ENCODE measurements at regions of chr5 and their contacts with region 1.

Region 1: DNA sequence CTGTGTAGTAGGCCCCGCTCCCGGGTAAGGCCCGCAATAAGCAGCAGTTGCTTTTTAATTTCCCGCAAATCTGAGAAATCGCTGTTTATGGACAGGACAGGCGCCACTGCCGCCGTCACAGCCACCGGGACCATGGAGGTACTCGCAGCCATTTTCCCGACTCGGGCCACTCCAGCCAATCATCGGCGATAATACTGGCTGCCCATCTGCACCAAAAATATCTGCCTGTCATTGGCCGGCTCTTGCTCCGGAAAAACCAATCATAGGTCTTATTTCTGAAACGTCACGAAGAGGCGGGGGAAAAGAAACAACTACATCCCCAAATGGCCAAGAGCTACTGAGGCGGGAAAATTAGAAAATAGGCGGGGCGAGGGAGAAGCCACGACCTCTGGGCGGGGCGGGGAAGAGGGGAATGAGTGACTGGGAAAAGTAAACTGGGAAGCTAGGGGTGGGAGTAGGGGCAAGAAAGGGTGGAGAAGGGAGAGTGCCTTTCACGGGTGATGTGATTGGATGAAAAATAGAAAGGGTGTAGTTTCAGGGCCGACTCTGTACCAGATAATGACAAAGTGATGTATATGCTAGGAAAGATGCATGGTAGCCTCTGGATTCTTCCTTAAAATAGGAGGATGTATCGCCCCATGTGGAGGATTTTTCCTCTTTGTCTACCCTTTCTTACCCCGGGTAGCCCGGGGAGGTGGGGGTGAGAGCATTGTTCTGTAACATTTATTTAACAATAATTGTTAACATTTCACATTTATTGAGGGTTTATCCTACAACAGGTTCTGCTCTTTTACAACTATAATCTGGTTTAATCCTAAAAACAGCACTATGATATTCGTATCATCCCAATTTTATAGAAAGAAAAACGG is at the start of gene CDC23:
- DNase-seq: peak; percentile 85 to 97
- H3K4me3 ChIP-seq: peak within 1 kb of the TSS; percentile 73 to 95
- H3K27ac ChIP-seq: peak within 1 kb of the TSS; percentile 60 to 72
- H3K4me1 ChIP-seq: peaks cover 0 to 8% of the 10 kb centered on the region in 2 donors
- H3K27me3 ChIP-seq: no peaks in the 10 kb centered on the region
- CTCF ChIP-seq: no peak
- total RNA-seq, gene CDC23: 13.2 TPM

Region 2: DNA sequence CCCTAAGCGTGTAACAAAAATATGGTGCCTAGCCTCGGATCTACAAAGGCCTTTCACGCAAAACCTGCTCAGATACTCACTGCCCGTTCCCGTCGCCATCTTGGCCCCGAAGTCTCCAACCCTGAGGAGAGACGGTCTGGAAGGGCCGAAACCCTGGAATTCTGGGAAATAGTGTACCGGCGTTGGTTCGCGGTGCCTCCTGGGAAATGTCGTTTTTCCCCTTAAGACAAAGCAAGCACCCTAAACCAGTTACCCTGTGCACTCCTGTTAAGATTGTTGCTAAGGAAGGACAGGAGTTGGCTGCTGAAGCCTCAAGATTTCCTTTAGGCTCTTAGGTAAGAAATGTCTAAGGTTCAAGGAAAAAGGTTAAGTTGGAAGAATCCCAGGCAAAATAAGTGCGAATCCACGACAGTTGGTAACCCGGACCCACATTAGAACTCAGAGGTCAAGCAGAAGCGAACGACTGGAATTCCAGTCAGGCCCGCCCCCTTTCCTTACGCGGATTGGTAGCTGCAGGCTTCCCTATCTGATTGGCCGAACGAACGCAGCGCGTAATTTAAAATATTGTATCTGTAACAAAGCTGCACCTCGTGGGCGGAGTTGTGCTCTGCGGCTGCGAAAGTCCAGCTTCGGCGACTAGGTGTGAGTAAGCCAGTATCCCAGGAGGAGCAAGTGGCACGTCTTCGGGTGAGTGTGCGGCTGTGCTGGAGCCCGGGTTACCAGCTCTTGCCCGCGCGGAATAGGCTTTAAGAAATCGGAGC is 34.7 kb before region 1 on chr5 and contains the starts of genes BRD8 and KIF20A:
- intact Hi-C with region 1: loop called (anchors 2 kb)
- DNase-seq: peak; percentile 89 to 98
- H3K4me3 ChIP-seq: peak within 1 kb of the TSS; percentile 82 to 94
- H3K27ac ChIP-seq: peak within 1 kb of the TSS; percentile 75 to 79
- H3K4me1 ChIP-seq: peaks cover 0 to 9% of the 10 kb centered on the region in 2 donors
- H3K27me3 ChIP-seq: no peaks in the 10 kb centered on the region
- CTCF ChIP-seq: no peak
- total RNA-seq, gene BRD8: 18.8 TPM
- total RNA-seq, gene KIF20A: not detected

Region 3: GRCh38 chr5:138316355-138316754 is 103.0 kb after region 1 on chr5:
- intact Hi-C with region 1: no loop called
- DNase-seq: no peak
- H3K4me3 ChIP-seq: no peak overlapping the region
- H3K27ac ChIP-seq: no peak overlapping the region
- H3K4me1 ChIP-seq: no peaks in the 10 kb centered on the region
- H3K27me3 ChIP-seq: no peaks in the 10 kb centered on the region
- CTCF ChIP-seq: no peak

Region 4: GRCh38 chr5:138337685-138338410 is 124.5 kb after region 1 on chr5 and contains the start of gene FAM53C:
- intact Hi-C with region 1: loop called (anchors 5 kb)
- DNase-seq: peak; percentile 69 to 94
- H3K4me3 ChIP-seq: peak within 1 kb of the TSS; percentile 87 to 93
- H3K27ac ChIP-seq: peak within 1 kb of the TSS; percentile 94 to 95
- H3K4me1 ChIP-seq: peaks cover 0 to 8% of the 10 kb centered on the region in 2 donors
- H3K27me3 ChIP-seq: no peaks in the 10 kb centered on the region
- CTCF ChIP-seq: no peak
- total RNA-seq, gene FAM53C: 40.0 TPM

Measured in ascending aorta (tissue), 2 donors.